Caco-2 (cell line): ENCODE measurements at regions of chr11 and their contacts with region 1.

Region 1: GRCh38 chr11:15503009-15503408 is 388.3 kb downstream of the INSC start:
- DNase-seq: peak in 1 of 2 experiments; percentile 35
- H3K4me3 ChIP-seq: no peak overlapping the region
- H3K4me3 Mint-ChIP-seq: no peak overlapping the region
- H3K27ac Mint-ChIP-seq: peak overlapping the region; percentile 14
- H3K4me1 ChIP-seq: peaks cover 23% of the 10 kb centered on the region
- H3K4me1 Mint-ChIP-seq: peaks cover 32% of the 10 kb centered on the region
- H3K27me3 ChIP-seq: no peaks in the 10 kb centered on the region
- H3K27me3 Mint-ChIP-seq: no peaks in the 10 kb centered on the region
- CTCF ChIP-seq: no peak

Region 2: DNA sequence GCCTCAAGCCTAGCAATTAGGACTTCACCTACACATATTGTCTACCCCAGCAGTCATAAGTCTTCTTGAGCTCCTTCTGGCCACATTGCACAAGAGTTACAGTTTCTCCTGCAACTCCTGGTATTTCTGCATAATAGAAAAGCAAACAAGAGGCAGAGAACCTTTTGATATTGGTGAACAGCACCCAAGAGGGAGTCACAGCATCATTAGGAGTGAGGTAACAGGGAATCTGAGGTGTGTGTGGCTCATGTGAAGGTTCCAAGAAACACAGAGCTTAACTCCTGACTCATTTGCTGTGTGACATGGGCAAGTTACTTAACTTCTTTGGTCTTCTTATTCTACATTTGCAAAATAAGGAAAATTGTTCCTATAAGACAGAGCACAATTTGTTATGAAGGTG is 13.7 kb before region 1 on chr11:
- CTCF ChIA-PET with region 1: no interaction called
- POLR2A ChIA-PET with region 1: no interaction called
- intact Hi-C with region 1: loop called (anchors 2 kb)
- DNase-seq: peak in 1 of 2 experiments; percentile 40
- H3K4me3 ChIP-seq: no peak overlapping the region
- H3K4me3 Mint-ChIP-seq: no peak overlapping the region
- H3K27ac Mint-ChIP-seq: no peak overlapping the region
- H3K4me1 ChIP-seq: no peaks in the 10 kb centered on the region
- H3K4me1 Mint-ChIP-seq: no peaks in the 10 kb centered on the region
- H3K27me3 ChIP-seq: no peaks in the 10 kb centered on the region
- H3K27me3 Mint-ChIP-seq: peaks cover 8% of the 10 kb centered on the region
- CTCF ChIP-seq: no peak

Region 3: GRCh38 chr11:15580056-15580774 is 77.2 kb after region 1 on chr11:
- CTCF ChIA-PET with region 1: no interaction called
- POLR2A ChIA-PET with region 1: no interaction called
- intact Hi-C with region 1: no loop called
- DNase-seq: no peak
- H3K4me3 ChIP-seq: no peak overlapping the region
- H3K4me3 Mint-ChIP-seq: no peak overlapping the region
- H3K27ac Mint-ChIP-seq: no peak overlapping the region
- H3K4me1 ChIP-seq: no peaks in the 10 kb centered on the region
- H3K4me1 Mint-ChIP-seq: no peaks in the 10 kb centered on the region
- H3K27me3 ChIP-seq: 0 out of 2 replicates have a peak, but pooled peaks cover 1% of the 10 kb centered on the region
- H3K27me3 Mint-ChIP-seq: no peaks in the 10 kb centered on the region
- CTCF ChIP-seq: no peak

Region 4: DNA sequence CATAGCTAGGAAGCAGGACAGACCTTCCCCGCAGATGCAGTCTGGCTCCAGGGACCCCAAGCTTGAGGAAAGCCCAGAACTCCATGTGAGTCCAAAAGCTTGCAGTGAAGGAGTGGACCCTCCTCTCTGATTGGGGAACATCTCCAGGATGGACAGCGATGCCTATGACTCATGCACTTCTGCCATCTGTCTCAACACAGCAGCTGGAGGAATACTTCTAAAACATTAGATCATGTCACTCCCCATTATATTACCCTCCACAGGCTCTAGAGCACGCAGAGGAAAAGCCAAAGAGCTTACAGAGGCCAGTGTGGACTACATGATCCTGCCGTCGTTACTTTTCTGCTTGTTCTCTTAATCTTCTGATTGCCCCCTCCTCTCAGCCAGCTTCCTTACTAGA is 217.5 kb after region 1 on chr11:
- CTCF ChIA-PET with region 1: no interaction called
- POLR2A ChIA-PET with region 1: no interaction called
- intact Hi-C with region 1: no loop called
- DNase-seq: no peak
- H3K4me3 ChIP-seq: no peak overlapping the region
- H3K4me3 Mint-ChIP-seq: no peak overlapping the region
- H3K27ac Mint-ChIP-seq: no peak overlapping the region
- H3K4me1 ChIP-seq: no peaks in the 10 kb centered on the region
- H3K4me1 Mint-ChIP-seq: no peaks in the 10 kb centered on the region
- H3K27me3 ChIP-seq: no peaks in the 10 kb centered on the region; the same call in 1 of the 2 replicates
- H3K27me3 Mint-ChIP-seq: peaks cover 5% of the 10 kb centered on the region
- CTCF ChIP-seq: no peak

Region 5: DNA sequence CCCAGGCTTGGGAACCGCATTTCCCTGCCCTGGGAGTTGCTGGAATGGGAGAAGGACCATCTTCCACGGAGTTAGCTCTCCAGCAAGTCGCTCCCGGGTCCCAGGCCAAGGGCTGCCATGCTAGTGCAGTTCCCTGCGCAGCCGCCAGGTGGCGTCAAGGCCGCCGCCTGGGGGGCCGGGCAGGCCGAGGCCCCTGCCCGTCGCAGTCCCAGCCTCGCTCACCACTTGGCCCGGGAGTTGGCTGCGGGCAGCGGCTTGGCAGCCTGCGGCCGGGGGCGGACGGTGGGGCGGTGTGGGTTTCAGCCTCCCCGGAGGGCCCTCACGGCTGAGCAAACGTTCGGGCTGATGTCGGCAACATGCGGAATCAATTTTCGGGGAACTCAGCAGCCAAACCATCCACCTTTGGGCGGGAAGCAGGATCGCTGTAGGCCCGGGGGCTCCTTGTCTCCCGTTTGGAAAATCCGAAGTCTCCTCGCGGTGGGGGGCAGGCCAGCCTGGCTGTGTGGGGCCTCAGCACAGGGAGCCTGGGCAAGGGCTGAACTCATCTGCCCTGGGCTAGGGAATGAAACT is 438.3 kb after region 1 on chr11:
- CTCF ChIA-PET with region 1: no interaction called
- POLR2A ChIA-PET with region 1: no interaction called
- intact Hi-C with region 1: no loop called
- DNase-seq: no peak
- H3K4me3 ChIP-seq: no peak overlapping the region
- H3K4me3 Mint-ChIP-seq: no peak overlapping the region
- H3K27ac Mint-ChIP-seq: no peak overlapping the region
- H3K4me1 ChIP-seq: no peaks in the 10 kb centered on the region
- H3K4me1 Mint-ChIP-seq: no peaks in the 10 kb centered on the region
- H3K27me3 ChIP-seq: no peaks in the 10 kb centered on the region
- H3K27me3 Mint-ChIP-seq: no peaks in the 10 kb centered on the region
- CTCF ChIP-seq: peak in 1 of 2 experiments; percentile 58